Left cardiac atrium (tissue), 4 donors: ENCODE measurements at regions of chr6 and their contacts with region 1.

Region 1: DNA sequence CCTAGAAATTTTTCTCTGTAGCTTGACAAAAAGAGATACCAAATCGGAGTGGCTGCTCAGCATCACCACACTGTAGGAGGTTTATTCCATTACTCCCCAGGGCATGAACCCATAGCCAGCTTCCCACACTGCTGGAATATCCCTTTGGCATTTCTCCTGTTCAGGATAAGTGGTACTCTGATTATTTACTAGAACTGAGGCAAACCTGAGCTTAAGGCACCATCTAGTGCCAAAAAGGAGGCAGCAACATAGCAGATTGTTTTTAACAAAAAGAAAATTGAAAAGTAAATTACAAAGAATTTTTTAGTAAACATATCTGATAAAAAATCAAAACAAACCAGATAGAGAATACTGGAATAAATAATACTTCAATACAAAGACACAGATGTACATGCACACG is 181.7 kb downstream of the WDR27 start:
- DNase-seq: no peak
- ATAC-seq: peak in 1 of 2 donors; percentile 59

Region 2: GRCh38 chr6:168895102-168895812 is 624.8 kb before region 1 on chr6:
- intact Hi-C with region 1: loop called in 1 of 2 experiments (anchors 5 kb)
- DNase-seq: peak; percentile 80
- ATAC-seq: peak; percentile 90 to 93

Region 3: GRCh38 chr6:168988801-168989200 is 531.3 kb before region 1 on chr6:
- intact Hi-C with region 1: no loop called
- DNase-seq: no peak
- ATAC-seq: peak; percentile 47 to 52

Region 4: DNA sequence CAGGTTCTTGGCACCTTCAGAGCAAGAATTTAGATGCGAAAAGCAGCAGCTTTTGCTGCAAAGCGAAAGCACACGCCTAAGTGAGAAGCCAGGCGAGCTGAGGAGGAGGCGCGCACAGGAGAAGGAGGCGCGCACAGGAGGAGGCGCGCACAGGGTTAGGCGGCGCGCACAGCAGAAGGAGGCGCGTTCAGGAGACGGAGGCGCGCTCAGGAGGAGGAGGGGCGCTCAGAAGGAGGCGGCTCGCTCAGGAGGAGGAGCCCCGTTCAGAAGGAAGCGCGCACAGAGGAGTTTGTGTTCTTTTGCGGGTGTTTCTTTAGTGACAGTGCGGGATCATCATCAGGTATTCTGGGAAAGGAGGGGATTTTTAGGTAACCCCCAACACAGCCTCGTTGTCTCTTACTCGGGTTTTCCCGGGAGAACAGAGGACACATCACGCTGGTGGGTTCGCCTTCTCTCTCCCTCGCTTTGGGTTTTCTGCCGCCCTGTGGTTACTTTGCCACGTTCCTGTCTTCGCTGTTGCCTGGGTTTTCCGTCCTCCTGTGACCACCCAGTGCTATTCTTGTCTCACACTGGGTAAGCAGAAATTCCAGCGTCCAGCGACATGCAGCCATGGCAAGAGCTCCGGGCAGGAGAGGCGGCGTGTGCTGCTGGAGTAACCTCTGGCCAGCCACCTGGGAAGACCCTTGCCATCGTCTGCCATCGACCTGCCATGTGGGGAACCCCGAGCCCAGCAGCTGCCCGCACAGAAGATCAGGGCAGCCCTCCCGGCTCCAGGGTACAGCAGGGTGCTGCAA is 134.7 kb after region 1 on chr6:
- intact Hi-C with region 1: no loop called
- DNase-seq: peak; percentile 80
- ATAC-seq: peak; percentile 62 to 98